PC-3 (cell line): ENCODE measurements at regions of chr5 and their contacts with region 1.

Region 1: GRCh38 chr5:93359296-93359958 is 221.6 kb downstream of the NR2F1-AS1 start:
- DNase-seq: peak; percentile 98
- ATAC-seq: peak; percentile 58
- H3K4me3 ChIP-seq: peak overlapping the region; percentile 40
- H3K27ac ChIP-seq: peak overlapping the region; percentile 78
- H3K4me1 ChIP-seq: peaks cover 58% of the 10 kb centered on the region
- H3K27me3 ChIP-seq: no peaks in the 10 kb centered on the region
- CTCF ChIP-seq: no peak

Region 2: GRCh38 chr5:93092349-93093105 is 266.9 kb before region 1 on chr5:
- CTCF ChIA-PET with region 1: no interaction called
- POLR2A ChIA-PET with region 1: no interaction called
- intact Hi-C with region 1: loop called (anchors 5 kb)
- DNase-seq: peak; percentile 65
- ATAC-seq: peak; percentile 87
- H3K4me3 ChIP-seq: no peak overlapping the region
- H3K27ac ChIP-seq: peak overlapping the region; percentile 24; the same call in 1 of the 2 replicates
- H3K4me1 ChIP-seq: peaks cover 14% of the 10 kb centered on the region
- H3K27me3 ChIP-seq: no peaks in the 10 kb centered on the region
- CTCF ChIP-seq: peak; percentile 74

Region 3: GRCh38 chr5:93236804-93237421 is 122.5 kb before region 1 on chr5:
- CTCF ChIA-PET with region 1: no interaction called
- POLR2A ChIA-PET with region 1: no interaction called
- intact Hi-C with region 1: loop called (anchors 2 kb)
- DNase-seq: peak; percentile 90
- ATAC-seq: peak; percentile 90
- H3K4me3 ChIP-seq: no peak overlapping the region
- H3K27ac ChIP-seq: peak overlapping the region; percentile 73
- H3K4me1 ChIP-seq: peaks cover 45% of the 10 kb centered on the region
- H3K27me3 ChIP-seq: no peaks in the 10 kb centered on the region
- CTCF ChIP-seq: peak; percentile 35; the same call in 1 of the 2 replicates

Region 4: GRCh38 chr5:93279296-93279963 is 80.0 kb before region 1 on chr5:
- CTCF ChIA-PET with region 1: no interaction called
- POLR2A ChIA-PET with region 1: no interaction called
- intact Hi-C with region 1: loop called (anchors 5 kb)
- DNase-seq: peak; percentile 64
- ATAC-seq: peak; percentile 74
- H3K4me3 ChIP-seq: peak overlapping the region; percentile 18; the same call in 1 of the 2 replicates
- H3K27ac ChIP-seq: peak overlapping the region; percentile 82
- H3K4me1 ChIP-seq: peaks cover 50% of the 10 kb centered on the region
- H3K27me3 ChIP-seq: no peaks in the 10 kb centered on the region
- CTCF ChIP-seq: no peak